Activated CD4-positive, alpha-beta T cell treated with anti-CD3 and anti-CD28 coated beads for 36 hours (primary cell): ENCODE measurements at regions of chr1 and their contacts with region 1.

Region 1: GRCh38 chr1:43529206-43529731 is 1.4 kb upstream of the PTPRF start:
- DNase-seq: peak; percentile 90
- ATAC-seq: peak; percentile 75
- H3K4me3 Mint-ChIP-seq: no peak overlapping the region
- H3K27ac Mint-ChIP-seq: no peak overlapping the region
- H3K4me1 Mint-ChIP-seq: peaks cover 20% of the 10 kb centered on the region
- H3K27me3 Mint-ChIP-seq: peaks cover 37% of the 10 kb centered on the region

Region 2: GRCh38 chr1:43554444-43554992 is 25.2 kb after region 1 on chr1:
- CTCF ChIA-PET with region 1: interaction called, 12 read pairs
- POLR2A ChIA-PET with region 1: no interaction called
- intact Hi-C with region 1: no loop called
- DNase-seq: peak; percentile 56
- ATAC-seq: peak; percentile 91
- H3K4me3 Mint-ChIP-seq: no peak overlapping the region
- H3K27ac Mint-ChIP-seq: no peak overlapping the region
- H3K4me1 Mint-ChIP-seq: peaks cover 4% of the 10 kb centered on the region
- H3K27me3 Mint-ChIP-seq: peaks cover 6% of the 10 kb centered on the region

Region 3: GRCh38 chr1:43650310-43651085 is 121.2 kb after region 1 on chr1:
- CTCF ChIA-PET with region 1: interaction called, 4 read pairs
- POLR2A ChIA-PET with region 1: no interaction called
- intact Hi-C with region 1: loop called (anchors 1 to 2 kb)
- DNase-seq: peak; percentile 95
- ATAC-seq: peak; percentile 81
- H3K4me3 Mint-ChIP-seq: peak overlapping the region; percentile 89
- H3K27ac Mint-ChIP-seq: peak overlapping the region; percentile 97
- H3K4me1 Mint-ChIP-seq: peaks cover 31% of the 10 kb centered on the region
- H3K27me3 Mint-ChIP-seq: no peaks in the 10 kb centered on the region

Region 4: GRCh38 chr1:43934101-43934985 is 405.1 kb after region 1 on chr1:
- CTCF ChIA-PET with region 1: interaction called, 11 read pairs
- POLR2A ChIA-PET with region 1: no interaction called
- intact Hi-C with region 1: loop called (anchors 1 to 2 kb)
- DNase-seq: peak; percentile 84
- ATAC-seq: peak; percentile 73
- H3K4me3 Mint-ChIP-seq: peak overlapping the region; percentile 16
- H3K27ac Mint-ChIP-seq: no peak overlapping the region
- H3K4me1 Mint-ChIP-seq: peaks cover 15% of the 10 kb centered on the region
- H3K27me3 Mint-ChIP-seq: peaks cover 25% of the 10 kb centered on the region

Region 5: DNA sequence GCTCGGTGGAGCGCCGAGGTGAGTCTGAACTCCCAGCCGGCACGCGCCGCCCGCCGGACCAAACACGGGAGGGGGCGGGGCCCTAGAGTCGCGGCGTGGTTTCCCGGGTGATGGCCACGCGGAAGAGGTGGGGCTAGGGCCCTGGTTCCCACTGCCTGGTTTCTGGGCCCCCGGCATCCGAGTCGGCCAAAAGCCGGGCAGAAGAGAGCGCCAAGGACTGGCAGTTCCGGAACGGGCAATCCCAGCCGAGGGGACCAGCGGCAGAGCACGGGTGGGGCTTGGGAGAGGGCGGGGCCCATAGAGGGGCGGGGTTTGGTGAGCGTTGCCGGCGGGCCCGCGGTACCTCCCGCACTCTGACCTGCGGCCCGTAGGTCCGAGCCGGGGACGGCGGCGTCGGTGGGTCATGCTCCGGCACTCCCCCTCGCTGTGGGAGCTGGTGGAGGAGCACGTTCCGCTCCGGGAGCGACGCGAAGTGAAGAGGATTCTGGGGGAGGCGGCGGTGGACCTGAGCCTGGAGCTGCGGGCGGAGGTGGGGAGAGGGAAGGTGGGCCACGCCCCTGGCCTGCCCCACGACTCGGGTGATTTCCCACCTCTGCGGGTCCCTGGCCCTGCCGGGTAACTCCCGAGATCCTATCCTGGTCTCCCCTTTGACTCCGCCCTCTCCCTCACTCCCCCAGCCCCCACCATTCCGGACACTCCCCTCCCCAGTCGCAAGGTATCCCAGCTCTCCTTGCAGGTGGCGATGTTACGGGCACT is 462.4 kb after region 1 on chr1 and contains the start of gene CCDC24:
- CTCF ChIA-PET with region 1: no interaction called
- POLR2A ChIA-PET with region 1: no interaction called
- intact Hi-C with region 1: no loop called
- DNase-seq: peak; percentile 82
- ATAC-seq: peak; percentile 82
- H3K4me3 Mint-ChIP-seq: peak within 1 kb of the TSS; percentile 79
- H3K27ac Mint-ChIP-seq: peak within 1 kb of the TSS; percentile 65
- H3K4me1 Mint-ChIP-seq: peaks cover 8% of the 10 kb centered on the region
- H3K27me3 Mint-ChIP-seq: no peaks in the 10 kb centered on the region
- total RNA-seq, gene CCDC24: 1.2 to 2.0 TPM

Region 6: DNA sequence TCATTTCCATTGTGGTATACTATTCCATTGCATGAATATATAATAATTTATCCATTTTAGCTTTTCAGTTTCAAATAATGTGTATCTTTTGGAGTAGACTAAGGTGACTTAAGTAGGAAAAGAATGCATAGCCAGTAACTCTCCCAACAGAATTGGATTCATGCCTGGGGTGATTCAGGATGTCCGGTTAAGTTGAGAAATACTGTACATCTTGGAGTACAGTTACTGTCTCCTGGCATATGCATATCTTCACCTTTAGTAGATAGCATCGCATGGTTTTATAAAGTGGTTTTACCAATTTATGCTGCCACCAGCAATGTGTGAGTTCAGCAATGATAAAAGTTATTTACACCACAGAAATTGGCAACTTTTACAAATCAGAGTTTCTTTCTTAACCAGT is 520.6 kb after region 1 on chr1:
- CTCF ChIA-PET with region 1: interaction called, 6 read pairs
- POLR2A ChIA-PET with region 1: no interaction called
- intact Hi-C with region 1: loop called (anchors 1 kb)
- DNase-seq: no peak
- ATAC-seq: no peak
- H3K4me3 Mint-ChIP-seq: no peak overlapping the region
- H3K27ac Mint-ChIP-seq: no peak overlapping the region
- H3K4me1 Mint-ChIP-seq: peaks cover 21% of the 10 kb centered on the region
- H3K27me3 Mint-ChIP-seq: peaks cover 8% of the 10 kb centered on the region